Mammary epithelial cell (primary cell): ENCODE measurements at regions of chr13 and their contacts with region 1.

Region 1: GRCh38 chr13:47774671-47774994 is 226.4 kb downstream of the SUCLA2 start:
- DNase-seq: no peak
- H3K4me3 ChIP-seq: no peak overlapping the region
- H3K27ac ChIP-seq: no peak overlapping the region
- H3K4me1 ChIP-seq: no peaks in the 10 kb centered on the region
- H3K27me3 ChIP-seq: no peaks in the 10 kb centered on the region
- CTCF ChIP-seq: no peak

Region 2: DNA sequence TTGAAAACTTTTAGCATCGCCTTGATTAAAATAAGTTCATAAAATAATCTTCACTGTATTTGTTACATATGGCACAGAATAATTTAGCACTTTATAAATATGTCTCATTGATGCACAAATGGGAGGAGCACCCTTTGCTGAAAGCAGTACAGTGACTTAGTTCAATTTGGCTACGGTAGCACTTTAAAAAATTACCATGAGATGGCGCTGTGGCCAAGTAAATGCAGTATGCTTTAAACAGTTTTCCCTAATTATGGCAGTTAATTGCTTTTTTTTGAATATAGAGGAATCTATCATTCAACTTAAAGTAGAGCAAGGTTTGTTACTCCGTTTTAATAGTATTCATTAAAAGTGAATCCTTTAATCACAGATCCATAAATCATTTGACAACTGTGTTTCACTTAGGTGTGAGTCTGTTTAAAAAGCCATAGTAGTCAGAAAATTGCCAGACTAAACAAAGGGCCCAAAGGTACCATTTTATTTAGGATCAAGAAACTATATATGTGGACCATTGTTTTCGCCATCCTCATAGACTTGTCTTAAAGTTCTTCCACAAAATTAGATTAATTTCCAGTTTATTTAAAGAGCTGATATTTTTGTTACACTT is 942.9 kb before region 1 on chr13:
- CTCF ChIA-PET with region 1: no interaction called
- dilution Hi-C with region 1: no loop called
- in situ Hi-C with region 1: loop called in 1 of 2 experiments (anchors 10 kb)
- intact Hi-C with region 1: loop called (anchors 1 kb)
- DNase-seq: peak; percentile 37
- H3K4me3 ChIP-seq: no peak overlapping the region
- H3K27ac ChIP-seq: no peak overlapping the region
- H3K4me1 ChIP-seq: no peaks in the 10 kb centered on the region
- H3K27me3 ChIP-seq: no peaks in the 10 kb centered on the region
- CTCF ChIP-seq: peak; percentile 78 to 79

Region 3: GRCh38 chr13:46961719-46962118 is 812.9 kb before region 1 on chr13:
- CTCF ChIA-PET with region 1: no interaction called
- dilution Hi-C with region 1: no loop called
- in situ Hi-C with region 1: loop called in 1 of 2 experiments (anchors 25 kb)
- intact Hi-C with region 1: no loop called
- DNase-seq: peak; percentile 81
- H3K4me3 ChIP-seq: no peak overlapping the region
- H3K27ac ChIP-seq: no peak overlapping the region
- H3K4me1 ChIP-seq: peaks cover 18% of the 10 kb centered on the region
- H3K27me3 ChIP-seq: no peaks in the 10 kb centered on the region
- CTCF ChIP-seq: no peak

Region 4: DNA sequence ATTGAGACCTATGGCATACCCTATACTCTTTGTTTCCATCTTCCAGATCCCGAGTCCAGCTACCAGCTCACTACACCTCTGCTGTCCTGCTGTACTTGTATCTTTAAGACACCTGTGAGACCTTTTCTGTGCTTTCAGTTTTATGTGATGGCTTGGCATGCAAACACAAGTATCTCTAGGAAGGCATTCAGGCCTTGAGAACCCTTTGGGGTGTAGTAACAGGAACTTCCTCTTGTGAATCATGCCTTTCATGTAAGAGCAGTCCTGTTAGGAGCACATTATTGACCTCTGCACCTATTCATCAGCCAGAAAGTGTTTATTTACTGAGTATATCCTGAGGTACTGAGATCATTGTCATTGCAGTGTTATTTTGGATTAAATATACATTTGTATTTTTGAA is 790.8 kb before region 1 on chr13:
- CTCF ChIA-PET with region 1: no interaction called
- dilution Hi-C with region 1: no loop called
- in situ Hi-C with region 1: loop called in 1 of 2 experiments (anchors 10 kb)
- intact Hi-C with region 1: no loop called
- DNase-seq: peak; percentile 73
- H3K4me3 ChIP-seq: no peak overlapping the region
- H3K27ac ChIP-seq: no peak overlapping the region
- H3K4me1 ChIP-seq: peaks cover 4% of the 10 kb centered on the region
- H3K27me3 ChIP-seq: no peaks in the 10 kb centered on the region
- CTCF ChIP-seq: no peak

Region 5: DNA sequence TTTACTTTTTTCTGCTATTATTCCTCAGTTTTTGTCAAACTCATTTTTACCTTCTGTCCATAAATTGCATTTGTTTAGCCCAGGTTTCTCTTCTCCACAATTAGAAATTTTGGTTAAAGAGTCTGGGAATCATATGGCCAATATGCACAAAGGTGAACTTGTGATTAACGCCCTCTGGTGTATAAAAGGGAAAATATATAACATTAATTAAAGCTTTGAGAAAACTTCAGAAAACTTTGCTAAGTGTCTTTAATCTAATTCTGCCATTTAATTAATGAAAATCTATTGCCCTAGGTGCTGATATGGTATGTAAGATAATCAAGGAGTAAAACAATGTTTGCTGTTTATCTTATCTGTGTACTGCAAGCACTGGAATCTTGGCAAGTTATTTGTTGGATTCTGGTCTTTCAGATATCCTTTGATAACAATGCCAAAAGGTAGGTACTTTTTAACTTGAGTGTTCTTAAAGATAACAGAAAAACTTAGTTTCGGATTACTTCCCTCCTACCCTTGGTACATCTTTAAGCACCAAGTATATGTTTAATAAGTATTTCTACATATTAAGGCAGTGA is 176.2 kb before region 1 on chr13:
- CTCF ChIA-PET with region 1: no interaction called
- dilution Hi-C with region 1: no loop called
- in situ Hi-C with region 1: no loop called
- intact Hi-C with region 1: loop called (anchors 2 kb)
- DNase-seq: no peak
- H3K4me3 ChIP-seq: no peak overlapping the region
- H3K27ac ChIP-seq: no peak overlapping the region
- H3K4me1 ChIP-seq: no peaks in the 10 kb centered on the region
- H3K27me3 ChIP-seq: peaks cover 2% of the 10 kb centered on the region
- CTCF ChIP-seq: peak; percentile 17 to 45